Naive thymus-derived CD4-positive, alpha-beta T cell (primary cell): ENCODE measurements at regions of chr4 and their contacts with region 1.

Region 1: GRCh38 chr4:81471588-81472288 is at the start of gene RASGEF1B:
- DNase-seq: peak; percentile 95 to 98 (median 97)
- ATAC-seq: peak; percentile 93
- H3K4me3 ChIP-seq: peak within 1 kb of the TSS; percentile 96
- H3K4me3 Mint-ChIP-seq: peak within 1 kb of the TSS; percentile 91 to 98 (median 95)
- H3K27ac ChIP-seq: peak within 1 kb of the TSS; percentile 96
- H3K27ac Mint-ChIP-seq: peak within 1 kb of the TSS; percentile 87 to 100 (median 98)
- H3K4me1 ChIP-seq: peaks cover 13 to 18% of the 10 kb centered on the region in 2 donors
- H3K4me1 Mint-ChIP-seq: peaks cover 31 to 52% (median 40%) of the 10 kb centered on the region in 7 donors
- H3K27me3 ChIP-seq: no peaks in the 10 kb centered on the region
- H3K27me3 Mint-ChIP-seq: peaks cover 0 to 14% (median 0%) of the 10 kb centered on the region in 5 donors
- total RNA-seq, gene RASGEF1B: 1.1 to 82.5 (median 11.5) TPM

Region 2: GRCh38 chr4:80058740-80059139 is 1413.0 kb before region 1 on chr4:
- CTCF ChIA-PET with region 1: no interaction called
- POLR2A ChIA-PET with region 1: no interaction called
- intact Hi-C with region 1: loop called in 1 of 2 experiments (anchors 10 kb)
- DNase-seq: peak in 7 of 9 donors; percentile 53 to 89 (median 84)
- ATAC-seq: peak; percentile 96
- H3K4me3 ChIP-seq: no peak overlapping the region
- H3K4me3 Mint-ChIP-seq: peak overlapping the region; percentile 54 to 86 (median 74)
- H3K27ac ChIP-seq: peak overlapping the region; percentile 86
- H3K27ac Mint-ChIP-seq: peak overlapping the region; percentile 91 to 99 (median 96)
- H3K4me1 ChIP-seq: peaks cover 10 to 13% of the 10 kb centered on the region in 2 donors
- H3K4me1 Mint-ChIP-seq: peaks cover 12 to 50% (median 42%) of the 10 kb centered on the region in 7 donors
- H3K27me3 ChIP-seq: no peaks in the 10 kb centered on the region
- H3K27me3 Mint-ChIP-seq: no peaks in the 10 kb centered on the region

Region 3: DNA sequence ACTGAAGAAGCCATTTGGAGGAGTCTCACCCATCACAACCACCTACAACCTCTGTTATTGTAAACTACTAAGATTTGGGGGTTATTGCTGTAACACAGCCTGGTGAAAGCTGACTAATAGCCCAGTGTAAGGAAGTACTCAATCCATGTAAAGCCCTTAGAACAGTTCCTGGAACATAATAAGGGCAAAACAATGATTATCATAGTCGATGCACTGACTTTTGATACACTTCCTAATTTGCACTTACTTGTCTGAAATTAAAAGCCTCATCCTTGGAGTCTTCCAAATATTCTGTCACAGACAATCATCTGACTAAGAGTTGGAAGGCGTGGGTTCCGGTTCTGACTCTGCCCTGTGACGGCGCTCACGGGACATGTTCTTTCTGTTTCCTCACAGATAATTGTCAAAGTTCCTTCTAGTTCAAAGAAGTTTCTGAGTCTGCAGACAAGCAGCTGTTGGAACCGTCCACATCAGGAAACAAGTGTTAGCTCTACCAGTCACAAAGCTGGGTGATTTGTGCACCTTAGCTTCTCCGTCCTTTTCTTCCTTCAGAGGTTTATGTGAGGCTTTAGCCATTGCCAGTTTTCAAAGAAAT is 33.4 kb after region 1 on chr4:
- CTCF ChIA-PET with region 1: interaction called, 5 read pairs
- POLR2A ChIA-PET with region 1: interaction called, 24 read pairs
- intact Hi-C with region 1: loop called (anchors 1 kb)
- DNase-seq: peak; percentile 28 to 79 (median 69)
- ATAC-seq: peak; percentile 86
- H3K4me3 ChIP-seq: peak overlapping the region; percentile 10
- H3K4me3 Mint-ChIP-seq: peak overlapping the region; percentile 7 to 81 (median 68)
- H3K27ac ChIP-seq: peak overlapping the region; percentile 48
- H3K27ac Mint-ChIP-seq: peak overlapping the region; percentile 58 to 96 (median 93)
- H3K4me1 ChIP-seq: peaks cover 10 to 14% of the 10 kb centered on the region in 2 donors
- H3K4me1 Mint-ChIP-seq: peaks cover 22 to 56% (median 31%) of the 10 kb centered on the region in 7 donors
- H3K27me3 ChIP-seq: no peaks in the 10 kb centered on the region
- H3K27me3 Mint-ChIP-seq: peaks cover 0 to 2% (median 0%) of the 10 kb centered on the region in 5 donors

Region 4: GRCh38 chr4:81538716-81539427 is 67.1 kb after region 1 on chr4:
- CTCF ChIA-PET with region 1: no interaction called
- POLR2A ChIA-PET with region 1: no interaction called
- intact Hi-C with region 1: no loop called
- DNase-seq: no peak
- ATAC-seq: no peak
- H3K4me3 ChIP-seq: no peak overlapping the region
- H3K4me3 Mint-ChIP-seq: no peak overlapping the region
- H3K27ac ChIP-seq: no peak overlapping the region
- H3K27ac Mint-ChIP-seq: peak overlapping the region in 1 of 9 donors; percentile 77
- H3K4me1 ChIP-seq: no peaks in the 10 kb centered on the region
- H3K4me1 Mint-ChIP-seq: peaks cover 0 to 6% (median 0%) of the 10 kb centered on the region in 7 donors
- H3K27me3 ChIP-seq: no peaks in the 10 kb centered on the region
- H3K27me3 Mint-ChIP-seq: no peaks in the 10 kb centered on the region

Region 5: GRCh38 chr4:81724925-81725329 is 253.2 kb after region 1 on chr4:
- CTCF ChIA-PET with region 1: no interaction called
- POLR2A ChIA-PET with region 1: no interaction called
- intact Hi-C with region 1: loop called in 1 of 2 experiments (anchors 2 kb)
- DNase-seq: peak in 1 of 9 donors; percentile 63
- ATAC-seq: peak; percentile 80
- H3K4me3 ChIP-seq: no peak overlapping the region
- H3K4me3 Mint-ChIP-seq: no peak overlapping the region
- H3K27ac ChIP-seq: no peak overlapping the region
- H3K27ac Mint-ChIP-seq: peak overlapping the region in 3 of 9 donors; percentile 49 to 89 (median 56)
- H3K4me1 ChIP-seq: peaks cover 0 to 6% of the 10 kb centered on the region in 2 donors
- H3K4me1 Mint-ChIP-seq: peaks cover 6 to 22% (median 14%) of the 10 kb centered on the region in 7 donors
- H3K27me3 ChIP-seq: no peaks in the 10 kb centered on the region
- H3K27me3 Mint-ChIP-seq: peaks cover 0 to 11% (median 9%) of the 10 kb centered on the region in 5 donors

Region 6: GRCh38 chr4:81919238-81919637 is 447.5 kb after region 1 on chr4:
- CTCF ChIA-PET with region 1: interaction called, 6 read pairs
- POLR2A ChIA-PET with region 1: no interaction called
- intact Hi-C with region 1: loop called (anchors 1 to 5 kb)
- DNase-seq: no peak
- ATAC-seq: peak; percentile 57
- H3K4me3 ChIP-seq: no peak overlapping the region
- H3K4me3 Mint-ChIP-seq: no peak overlapping the region
- H3K27ac ChIP-seq: no peak overlapping the region
- H3K27ac Mint-ChIP-seq: no peak overlapping the region
- H3K4me1 ChIP-seq: no peaks in the 10 kb centered on the region
- H3K4me1 Mint-ChIP-seq: peaks cover 0 to 7% (median 3%) of the 10 kb centered on the region in 7 donors
- H3K27me3 ChIP-seq: no peaks in the 10 kb centered on the region
- H3K27me3 Mint-ChIP-seq: peaks cover 5 to 16% (median 11%) of the 10 kb centered on the region in 5 donors

Region 7: DNA sequence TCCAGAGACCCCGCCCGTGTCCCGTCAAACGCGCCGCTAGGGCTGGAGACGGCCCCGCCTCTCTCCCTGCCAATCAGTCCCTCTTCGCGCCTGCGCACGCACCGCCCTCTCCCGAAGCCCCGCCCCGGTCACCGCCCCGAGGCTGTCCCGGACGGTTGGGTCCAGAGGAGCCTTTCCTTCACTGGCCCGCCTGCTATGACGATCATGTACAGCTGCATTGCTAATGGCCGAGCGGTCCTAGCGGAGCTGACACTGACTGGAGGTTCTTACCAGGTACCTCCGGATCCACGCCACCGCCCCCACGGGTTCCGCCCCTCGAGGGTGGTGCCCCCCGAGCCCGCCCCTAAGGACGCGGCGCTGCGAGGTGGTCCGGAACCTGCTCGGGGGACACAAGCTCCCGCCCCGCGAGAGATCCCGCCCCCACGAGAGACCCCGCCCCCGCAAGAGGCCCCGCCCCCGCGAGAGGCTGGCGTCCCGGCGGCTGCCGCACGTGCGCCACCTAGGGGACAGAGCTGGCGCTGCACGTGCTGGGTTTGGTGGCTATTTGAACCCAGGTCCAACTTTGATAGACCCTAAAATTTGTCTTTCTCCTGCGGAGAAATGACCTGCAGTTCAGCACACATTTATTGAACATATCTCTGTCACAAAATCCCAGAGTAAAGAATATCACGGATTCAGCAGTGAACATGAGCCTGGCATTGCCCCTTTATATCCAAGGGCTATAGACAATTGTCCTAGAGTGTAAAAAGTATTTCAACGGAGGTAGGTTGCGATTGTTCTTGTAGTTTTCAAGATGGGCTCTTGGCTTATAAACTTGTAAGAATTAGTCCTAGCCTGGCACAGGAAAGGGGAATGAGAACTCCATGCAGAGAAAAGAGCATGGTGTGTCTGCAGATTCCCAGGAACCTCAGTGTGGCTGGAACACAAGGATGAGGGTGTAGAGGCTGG is 813.4 kb after region 1 on chr4:
- CTCF ChIA-PET with region 1: no interaction called
- POLR2A ChIA-PET with region 1: interaction called, 9 read pairs
- intact Hi-C with region 1: loop called (anchors 1 kb)
- DNase-seq: peak; percentile 97 to 100 (median 99)
- ATAC-seq: peak; percentile 94
- H3K4me3 ChIP-seq: peak overlapping the region; percentile 55
- H3K4me3 Mint-ChIP-seq: peak overlapping the region; percentile 70 to 91 (median 86)
- H3K27ac ChIP-seq: peak overlapping the region; percentile 71
- H3K27ac Mint-ChIP-seq: peak overlapping the region; percentile 53 to 94 (median 83)
- H3K4me1 ChIP-seq: peaks cover 4 to 11% of the 10 kb centered on the region in 2 donors
- H3K4me1 Mint-ChIP-seq: peaks cover 9 to 22% (median 13%) of the 10 kb centered on the region in 7 donors
- H3K27me3 ChIP-seq: no peaks in the 10 kb centered on the region
- H3K27me3 Mint-ChIP-seq: peaks cover 0 to 28% (median 0%) of the 10 kb centered on the region in 5 donors

Region 8: GRCh38 chr4:83110223-83110945 is 1638.6 kb after region 1 on chr4:
- CTCF ChIA-PET with region 1: no interaction called
- POLR2A ChIA-PET with region 1: no interaction called
- intact Hi-C with region 1: loop called in 1 of 2 experiments (anchors 5 kb)
- DNase-seq: peak; percentile 81 to 89 (median 87)
- ATAC-seq: peak; percentile 88
- H3K4me3 ChIP-seq: peak overlapping the region; percentile 82
- H3K4me3 Mint-ChIP-seq: peak overlapping the region; percentile 94 to 99 (median 98)
- H3K27ac ChIP-seq: peak overlapping the region; percentile 88
- H3K27ac Mint-ChIP-seq: peak overlapping the region; percentile 92 to 99 (median 98)
- H3K4me1 ChIP-seq: peaks cover 24 to 35% of the 10 kb centered on the region in 2 donors
- H3K4me1 Mint-ChIP-seq: peaks cover 26 to 60% (median 45%) of the 10 kb centered on the region in 7 donors
- H3K27me3 ChIP-seq: no peaks in the 10 kb centered on the region
- H3K27me3 Mint-ChIP-seq: no peaks in the 10 kb centered on the region